CD4-positive, alpha-beta memory T cell (primary cell): ENCODE measurements at regions of chr17 and their contacts with region 1.

Region 1: DNA sequence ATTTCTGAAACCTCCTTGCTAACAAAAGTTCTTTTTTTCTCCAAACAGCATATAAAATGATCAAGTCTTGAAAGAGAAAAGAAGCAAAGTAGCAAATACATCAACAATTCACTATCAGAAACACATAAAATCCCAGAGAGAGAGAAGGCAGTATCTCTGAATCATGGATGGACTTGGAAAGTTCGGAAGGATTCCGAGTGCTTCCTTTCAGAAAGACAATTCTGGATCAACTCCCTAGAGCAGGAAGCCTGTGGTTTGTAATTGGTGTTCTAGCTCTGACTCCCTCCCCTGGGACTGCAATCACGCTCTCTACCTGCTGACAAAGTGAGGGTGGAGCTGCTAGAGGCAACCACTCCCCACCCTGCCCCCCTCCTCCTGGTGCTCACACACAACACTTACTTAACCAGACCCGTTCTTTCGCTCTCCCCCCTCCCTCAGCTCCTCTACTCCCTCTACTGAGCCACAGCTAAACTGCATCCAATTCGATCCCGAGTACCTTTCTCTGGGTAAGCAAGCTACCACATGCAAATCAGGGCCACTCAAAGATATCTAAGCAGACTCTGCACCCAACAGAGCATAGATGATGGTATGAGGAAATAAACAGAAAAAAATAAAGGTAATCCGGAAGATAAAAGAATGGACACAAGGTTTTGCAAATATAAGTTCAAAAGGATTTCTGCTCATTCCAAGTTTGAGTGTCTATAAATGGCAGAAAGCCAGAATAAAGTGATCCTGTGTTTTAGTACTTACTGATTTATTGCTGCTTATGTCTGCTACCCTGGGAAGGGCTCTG is at the start of gene RNF43:
- DNase-seq: peak; percentile 85 to 96 (median 89)
- H3K4me3 ChIP-seq: no peak within 1 kb of the TSS
- H3K4me3 Mint-ChIP-seq: peak within 1 kb of the TSS in 2 of 8 donors; percentile 38 to 39
- H3K27ac ChIP-seq: peak within 1 kb of the TSS; percentile 4
- H3K27ac Mint-ChIP-seq: peak within 1 kb of the TSS in 6 of 7 donors; percentile 42 to 77 (median 69)
- H3K4me1 ChIP-seq: peaks cover 15% of the 10 kb centered on the region
- H3K4me1 Mint-ChIP-seq: peaks cover 7 to 15% (median 9%) of the 10 kb centered on the region in 4 donors
- H3K27me3 ChIP-seq: no peaks in the 10 kb centered on the region
- H3K27me3 Mint-ChIP-seq: no peaks in the 10 kb centered on the region
- total RNA-seq, gene RNF43: 1.2 to 1.6 TPM

Region 2: DNA sequence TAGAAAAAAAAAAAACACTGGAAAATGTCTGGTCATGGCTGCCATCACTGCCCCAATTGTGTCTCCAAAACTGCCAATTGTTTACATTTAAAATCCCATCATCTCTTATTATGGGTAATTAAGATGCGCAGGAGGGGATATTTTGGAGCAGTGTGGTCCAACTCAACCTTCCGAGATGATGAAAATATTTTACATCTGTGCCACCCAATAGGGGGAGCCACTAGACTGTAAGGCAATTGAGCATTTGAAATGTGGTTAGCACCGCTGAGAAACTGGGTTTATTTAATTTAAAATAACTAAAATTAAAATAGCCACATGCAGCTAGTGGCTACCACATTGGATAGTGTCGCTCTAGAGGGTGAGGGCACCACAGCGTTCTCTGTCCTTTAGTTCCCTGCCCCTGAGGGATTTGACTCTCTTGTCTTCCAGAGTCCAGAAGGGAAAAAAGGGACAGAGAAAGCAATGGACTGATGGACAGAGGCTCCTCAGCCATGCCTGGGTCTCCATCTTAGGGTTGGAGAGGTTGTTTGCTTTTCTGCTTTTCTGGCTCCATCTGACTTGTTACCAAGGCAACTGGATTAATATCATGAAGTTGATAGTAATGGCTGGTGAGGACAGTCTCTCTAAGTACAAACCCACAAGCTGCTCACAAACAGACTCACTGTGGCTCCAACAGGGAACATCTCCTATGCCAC is 140.2 kb before region 1 on chr17:
- CTCF ChIA-PET with region 1: interaction called, 3 read pairs
- POLR2A ChIA-PET with region 1: no interaction called
- intact Hi-C with region 1: loop called (anchors 1 kb)
- DNase-seq: peak in 4 of 5 donors; percentile 10 to 15 (median 12)
- H3K4me3 ChIP-seq: no peak overlapping the region
- H3K4me3 Mint-ChIP-seq: no peak overlapping the region
- H3K27ac ChIP-seq: no peak overlapping the region
- H3K27ac Mint-ChIP-seq: peak overlapping the region in 1 of 7 donors; percentile 48
- H3K4me1 ChIP-seq: no peaks in the 10 kb centered on the region
- H3K4me1 Mint-ChIP-seq: peaks cover 0 to 4% (median 3%) of the 10 kb centered on the region in 4 donors
- H3K27me3 ChIP-seq: no peaks in the 10 kb centered on the region
- H3K27me3 Mint-ChIP-seq: peaks cover 5 to 15% of the 10 kb centered on the region in 2 donors

Region 3: DNA sequence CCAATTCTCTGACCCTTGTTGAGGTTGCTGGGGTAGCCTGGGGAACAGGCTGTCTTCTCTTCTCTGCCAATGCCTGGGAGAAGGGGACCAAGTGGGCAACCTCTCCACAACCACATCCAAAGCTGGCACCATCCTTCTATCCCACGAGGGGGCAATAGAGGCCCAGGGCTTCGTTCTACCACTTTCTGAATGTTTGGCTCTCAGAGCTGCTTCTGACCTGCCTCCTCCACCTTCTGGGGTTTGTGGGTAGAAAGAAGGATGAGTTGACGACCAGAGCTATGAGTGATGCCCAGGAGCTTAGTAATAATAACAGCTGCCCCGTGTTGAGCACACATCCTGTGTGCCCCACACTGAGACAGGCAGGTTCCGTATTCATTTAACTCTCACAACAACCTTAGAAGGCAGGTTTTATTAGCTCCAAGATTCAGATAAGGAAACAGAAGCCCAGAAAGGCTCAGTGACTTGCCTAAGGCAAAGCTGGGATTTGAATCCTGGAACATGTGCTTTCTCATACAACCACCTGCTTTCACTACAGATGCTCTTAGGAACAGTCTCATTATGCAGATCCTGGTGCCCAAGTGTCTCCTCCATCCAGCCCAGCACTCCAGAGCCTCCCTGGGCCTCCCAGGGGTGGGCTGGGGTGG is 100.0 kb before region 1 on chr17:
- CTCF ChIA-PET with region 1: interaction called, 171 read pairs
- POLR2A ChIA-PET with region 1: interaction called, 33 read pairs
- intact Hi-C with region 1: loop called (anchors 1 kb)
- DNase-seq: peak; percentile 80 to 84 (median 82)
- H3K4me3 ChIP-seq: peak overlapping the region in 1 of 2 donors; percentile 4
- H3K4me3 Mint-ChIP-seq: peak overlapping the region in 3 of 8 donors; percentile 18 to 48 (median 35)
- H3K27ac ChIP-seq: peak overlapping the region; percentile 31
- H3K27ac Mint-ChIP-seq: peak overlapping the region; percentile 80 to 95 (median 91)
- H3K4me1 ChIP-seq: peaks cover 18% of the 10 kb centered on the region
- H3K4me1 Mint-ChIP-seq: peaks cover 8 to 31% (median 14%) of the 10 kb centered on the region in 4 donors
- H3K27me3 ChIP-seq: no peaks in the 10 kb centered on the region
- H3K27me3 Mint-ChIP-seq: no peaks in the 10 kb centered on the region

Region 4: DNA sequence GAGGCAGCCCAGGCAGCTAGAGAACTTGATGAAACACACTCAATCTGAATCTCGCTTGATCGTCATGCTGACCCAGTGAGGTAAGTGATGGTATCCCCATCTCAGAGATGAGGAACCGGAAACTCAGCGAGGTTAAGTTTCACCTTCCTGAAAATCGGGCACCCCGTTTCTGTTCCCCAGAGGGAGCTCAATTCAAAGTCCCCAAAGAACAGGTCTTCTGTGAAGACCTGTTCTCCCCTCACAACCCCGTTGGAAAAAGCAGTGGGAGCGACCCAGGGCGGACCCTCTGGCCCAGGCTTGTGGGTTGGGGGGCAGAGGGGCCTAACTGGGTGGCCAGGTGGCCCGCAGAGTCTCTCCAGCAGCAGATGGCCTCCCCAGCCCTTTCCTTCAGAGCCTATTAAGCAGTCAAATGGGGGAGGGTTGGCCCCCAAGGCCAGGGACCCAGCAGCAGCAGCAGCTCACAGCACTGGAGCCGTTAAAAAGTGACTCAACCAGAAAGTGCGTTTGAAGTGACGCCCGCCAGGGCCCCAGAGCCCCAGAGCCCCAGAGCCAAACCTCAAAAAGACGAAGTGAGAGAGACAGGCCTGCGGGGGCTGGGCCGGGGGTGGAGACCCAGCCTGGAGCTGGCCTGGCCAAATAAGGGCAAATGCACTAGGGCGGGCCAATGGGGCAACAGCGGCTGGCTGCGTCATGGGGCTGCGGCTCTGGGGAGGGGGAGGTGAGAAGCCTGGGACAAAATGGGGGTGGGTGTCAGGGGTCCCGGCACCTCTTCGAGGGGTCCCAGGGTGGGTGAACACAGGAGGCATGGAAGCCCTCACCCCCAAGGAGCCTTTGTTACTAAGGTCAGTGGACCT is 79.7 kb before region 1 on chr17:
- CTCF ChIA-PET with region 1: interaction called, 56 read pairs
- POLR2A ChIA-PET with region 1: interaction called, 13 read pairs
- intact Hi-C with region 1: no loop called
- DNase-seq: peak; percentile 89 to 96 (median 91)
- H3K4me3 ChIP-seq: peak overlapping the region; percentile 99
- H3K4me3 Mint-ChIP-seq: peak overlapping the region; percentile 88 to 99 (median 98)
- H3K27ac ChIP-seq: peak overlapping the region; percentile 97
- H3K27ac Mint-ChIP-seq: peak overlapping the region; percentile 94 to 99 (median 97)
- H3K4me1 ChIP-seq: peaks cover 89% of the 10 kb centered on the region
- H3K4me1 Mint-ChIP-seq: peaks cover 41 to 98% (median 64%) of the 10 kb centered on the region in 4 donors
- H3K27me3 ChIP-seq: no peaks in the 10 kb centered on the region
- H3K27me3 Mint-ChIP-seq: no peaks in the 10 kb centered on the region

Region 5: GRCh38 chr17:58352014-58352842 is 65.3 kb before region 1 on chr17 and contains the start of gene SUPT4H1:
- CTCF ChIA-PET with region 1: interaction called, 56 read pairs
- POLR2A ChIA-PET with region 1: interaction called, 34 read pairs
- intact Hi-C with region 1: loop called (anchors 1 kb)
- DNase-seq: peak; percentile 91 to 94 (median 94)
- H3K4me3 ChIP-seq: peak within 1 kb of the TSS; percentile 92 to 98
- H3K4me3 Mint-ChIP-seq: peak within 1 kb of the TSS; percentile 99 to 100 (median 99)
- H3K27ac ChIP-seq: peak within 1 kb of the TSS; percentile 85
- H3K27ac Mint-ChIP-seq: peak within 1 kb of the TSS; percentile 98 to 100 (median 99)
- H3K4me1 ChIP-seq: peaks cover 57% of the 10 kb centered on the region
- H3K4me1 Mint-ChIP-seq: peaks cover 37 to 65% (median 52%) of the 10 kb centered on the region in 4 donors
- H3K27me3 ChIP-seq: no peaks in the 10 kb centered on the region
- H3K27me3 Mint-ChIP-seq: no peaks in the 10 kb centered on the region
- total RNA-seq, gene SUPT4H1: 61.4 to 75.2 TPM

Region 6: GRCh38 chr17:58487589-58488427 is 70.3 kb after region 1 on chr17 and contains the start of gene HSF5:
- CTCF ChIA-PET with region 1: interaction called, 11 read pairs
- POLR2A ChIA-PET with region 1: interaction called, 7 read pairs
- intact Hi-C with region 1: no loop called
- DNase-seq: peak; percentile 76 to 83 (median 82)
- H3K4me3 ChIP-seq: peak within 1 kb of the TSS; percentile 46 to 47
- H3K4me3 Mint-ChIP-seq: peak within 1 kb of the TSS; percentile 50 to 81 (median 70)
- H3K27ac ChIP-seq: peak within 1 kb of the TSS; percentile 20
- H3K27ac Mint-ChIP-seq: peak within 1 kb of the TSS in 5 of 7 donors; percentile 15 to 72 (median 47)
- H3K4me1 ChIP-seq: peaks cover 4% of the 10 kb centered on the region
- H3K4me1 Mint-ChIP-seq: peaks cover 5 to 15% (median 5%) of the 10 kb centered on the region in 4 donors
- H3K27me3 ChIP-seq: no peaks in the 10 kb centered on the region
- H3K27me3 Mint-ChIP-seq: no peaks in the 10 kb centered on the region
- total RNA-seq, gene HSF5: 2.1 to 2.4 TPM

Region 7: DNA sequence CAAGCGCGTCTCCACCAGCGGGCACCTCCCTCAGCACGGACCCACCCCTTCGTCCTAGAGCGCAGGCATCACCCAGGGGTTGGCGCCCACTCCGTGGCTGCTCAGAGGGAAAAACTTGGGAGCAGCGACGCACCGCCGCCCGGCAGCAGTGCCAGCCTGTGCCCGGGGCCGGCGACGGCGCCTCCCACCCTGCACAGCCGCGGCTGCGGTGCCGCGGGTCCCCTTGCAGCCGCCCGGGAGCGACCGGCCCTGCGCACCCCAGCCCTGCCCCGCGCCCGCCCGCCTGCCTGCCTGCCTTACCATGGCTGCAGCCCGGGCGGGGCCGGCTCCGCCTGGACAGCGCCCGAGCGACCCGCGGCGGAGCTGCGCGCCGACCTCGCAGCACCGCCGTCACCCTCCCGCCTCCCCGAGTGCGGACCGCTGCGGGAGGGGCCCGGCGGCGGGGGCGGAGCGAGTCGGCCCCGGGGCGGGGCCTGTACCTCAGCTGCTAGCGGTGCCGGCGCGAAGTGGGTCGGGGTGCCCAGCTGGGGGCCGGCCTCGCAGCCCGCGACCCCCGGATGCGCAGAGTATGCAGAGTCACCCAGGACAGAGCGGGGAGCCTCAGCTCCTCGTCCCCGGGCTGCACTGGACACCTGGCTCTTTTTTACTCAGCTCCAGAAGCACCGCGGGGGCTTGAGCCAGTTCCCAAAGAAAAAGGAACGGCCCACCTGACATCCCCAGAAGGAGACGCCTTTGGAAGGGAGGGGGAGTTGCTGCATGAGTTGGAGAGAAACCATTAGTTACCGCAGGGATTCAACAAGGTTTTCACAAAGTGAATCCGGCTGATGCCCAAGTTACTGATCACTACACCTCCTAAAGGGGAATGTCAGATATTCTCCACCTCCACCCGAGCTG is 114.4 kb after region 1 on chr17:
- CTCF ChIA-PET with region 1: no interaction called
- POLR2A ChIA-PET with region 1: no interaction called
- intact Hi-C with region 1: no loop called
- DNase-seq: peak in 4 of 5 donors; percentile 55 to 64 (median 60)
- H3K4me3 ChIP-seq: peak overlapping the region in 1 of 2 donors; percentile 33
- H3K4me3 Mint-ChIP-seq: peak overlapping the region; percentile 61 to 75 (median 70)
- H3K27ac ChIP-seq: no peak overlapping the region
- H3K27ac Mint-ChIP-seq: peak overlapping the region in 1 of 7 donors; percentile 42
- H3K4me1 ChIP-seq: peaks cover 11% of the 10 kb centered on the region
- H3K4me1 Mint-ChIP-seq: peaks cover 0 to 4% (median 0%) of the 10 kb centered on the region in 4 donors
- H3K27me3 ChIP-seq: no peaks in the 10 kb centered on the region
- H3K27me3 Mint-ChIP-seq: peaks cover 0 to 5% of the 10 kb centered on the region in 2 donors